ENCODE measurements at regions of chr11 and their contacts with region 1.

Region 1: GRCh38 chr11:110833033-110833484 is 120.8 kb upstream of the ARHGAP20 start:
- DNase-seq: no peak
- ATAC-seq: peak; percentile 84
- H3K4me3 Mint-ChIP-seq: no peak overlapping the region
- H3K27ac Mint-ChIP-seq: peak overlapping the region; percentile 98
- H3K4me1 Mint-ChIP-seq: peaks cover 35% of the 10 kb centered on the region
- H3K27me3 Mint-ChIP-seq: peaks cover 3% of the 10 kb centered on the region

Region 2: DNA sequence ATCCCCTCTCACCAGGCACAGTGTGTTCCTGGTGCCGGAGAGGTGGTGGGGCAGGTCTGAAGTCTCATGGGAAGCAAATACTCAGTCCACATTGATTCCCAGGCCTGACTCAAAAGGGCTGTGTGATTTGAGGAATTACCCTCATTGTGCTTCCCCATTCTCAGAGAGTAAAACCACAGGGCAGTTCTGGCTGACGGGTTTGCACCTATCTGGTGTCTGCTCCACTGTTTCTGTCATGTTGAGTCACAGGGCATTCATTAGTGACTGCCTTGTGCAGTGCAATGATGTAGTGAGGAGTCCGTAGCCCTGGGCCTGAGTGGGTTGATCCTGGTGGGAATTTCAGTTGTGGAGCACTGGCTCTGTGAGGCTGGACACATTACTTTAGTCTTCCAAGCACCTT is 35.6 kb before region 1 on chr11:
- CTCF ChIA-PET with region 1: no interaction called
- POLR2A ChIA-PET with region 1: no interaction called
- intact Hi-C with region 1: loop called in 1 of 2 experiments (anchors 1 kb)
- DNase-seq: no peak
- ATAC-seq: peak; percentile 69
- H3K4me3 Mint-ChIP-seq: no peak overlapping the region
- H3K27ac Mint-ChIP-seq: no peak overlapping the region
- H3K4me1 Mint-ChIP-seq: peaks cover 5% of the 10 kb centered on the region
- H3K27me3 Mint-ChIP-seq: peaks cover 2% of the 10 kb centered on the region

Region 3: GRCh38 chr11:110818032-110818687 is 14.9 kb before region 1 on chr11:
- CTCF ChIA-PET with region 1: interaction called, 3 read pairs
- POLR2A ChIA-PET with region 1: no interaction called
- intact Hi-C with region 1: loop called (anchors 1 kb)
- DNase-seq: peak; percentile 66
- ATAC-seq: peak; percentile 95
- H3K4me3 Mint-ChIP-seq: no peak overlapping the region
- H3K27ac Mint-ChIP-seq: peak overlapping the region; percentile 83
- H3K4me1 Mint-ChIP-seq: peaks cover 20% of the 10 kb centered on the region
- H3K27me3 Mint-ChIP-seq: peaks cover 10% of the 10 kb centered on the region

Region 4: GRCh38 chr11:111520565-111520964 is 687.5 kb after region 1 on chr11:
- CTCF ChIA-PET with region 1: no interaction called
- POLR2A ChIA-PET with region 1: no interaction called
- intact Hi-C with region 1: loop called in 1 of 2 experiments (anchors 5 kb)
- DNase-seq: no peak
- ATAC-seq: no peak
- H3K4me3 Mint-ChIP-seq: no peak overlapping the region
- H3K27ac Mint-ChIP-seq: no peak overlapping the region
- H3K4me1 Mint-ChIP-seq: peaks cover 37% of the 10 kb centered on the region
- H3K27me3 Mint-ChIP-seq: peaks cover 5% of the 10 kb centered on the region

Measured in activated CD4-positive, alpha-beta T cell treated with anti-CD3 and anti-CD28 coated beads for 36 hours (primary cell).